Heart right ventricle (tissue), 16 donors: ENCODE measurements at regions of chr3 and their contacts with region 1.

Region 1: GRCh38 chr3:56823421-56824343 is 21.9 kb upstream of the ARHGEF3 start:
- DNase-seq: no peak
- ATAC-seq: no peak
- H3K4me3 ChIP-seq: no peak overlapping the region
- H3K27ac ChIP-seq: no peak overlapping the region
- H3K4me1 ChIP-seq: peaks cover 0 to 18% (median 8%) of the 10 kb centered on the region in 9 donors
- H3K27me3 ChIP-seq: no peaks in the 10 kb centered on the region
- CTCF ChIP-seq: no peak

Region 2: DNA sequence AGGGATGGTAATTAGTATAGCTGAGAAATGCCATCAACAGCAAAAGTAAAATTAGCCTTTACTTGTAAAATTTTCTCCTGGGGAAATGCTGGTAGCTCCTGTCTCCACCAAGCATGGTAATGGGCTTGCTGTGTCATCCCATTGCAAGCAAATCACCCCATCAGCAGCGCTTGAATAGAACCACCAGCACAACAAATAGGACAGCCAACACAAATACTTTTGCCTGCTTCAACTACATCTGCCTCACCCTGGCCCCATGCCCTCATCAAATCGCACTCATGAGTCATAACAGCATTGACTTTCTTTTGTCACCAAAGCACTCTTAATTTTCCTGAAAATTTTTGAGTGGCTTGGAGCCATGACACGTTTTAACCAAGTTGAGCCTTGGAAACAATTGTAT is 408.0 kb before region 1 on chr3:
- intact Hi-C with region 1: no loop called
- DNase-seq: no peak
- ATAC-seq: no peak
- H3K4me3 ChIP-seq: no peak overlapping the region
- H3K27ac ChIP-seq: no peak overlapping the region
- H3K4me1 ChIP-seq: no peaks in the 10 kb centered on the region
- H3K27me3 ChIP-seq: no peaks in the 10 kb centered on the region
- CTCF ChIP-seq: no peak

Region 3: GRCh38 chr3:56758539-56758981 is 65.1 kb before region 1 on chr3:
- intact Hi-C with region 1: no loop called
- DNase-seq: no peak
- ATAC-seq: peak in 3 of 8 donors; percentile 28 to 67 (median 30)
- H3K4me3 ChIP-seq: peak overlapping the region in 1 of 10 donors; percentile 5
- H3K27ac ChIP-seq: peak overlapping the region in 4 of 10 donors; percentile 0 to 84 (median 28)
- H3K4me1 ChIP-seq: peaks cover 12 to 90% (median 40%) of the 10 kb centered on the region in 9 donors
- H3K27me3 ChIP-seq: no peaks in the 10 kb centered on the region
- CTCF ChIP-seq: no peak

Region 4: GRCh38 chr3:56970461-56970879 is 146.8 kb after region 1 on chr3:
- intact Hi-C with region 1: loop called in 1 of 10 experiments (anchors 5 kb)
- DNase-seq: no peak
- ATAC-seq: peak in 7 of 8 donors; percentile 24 to 74 (median 48)
- H3K4me3 ChIP-seq: no peak overlapping the region
- H3K27ac ChIP-seq: peak overlapping the region in 2 of 10 donors; percentile 11 to 39
- H3K4me1 ChIP-seq: peaks cover 0 to 16% (median 0%) of the 10 kb centered on the region in 9 donors
- H3K27me3 ChIP-seq: no peaks in the 10 kb centered on the region
- CTCF ChIP-seq: no peak